Activated CD8-positive, alpha-beta T cell treated with anti-CD3 and anti-CD28 coated beads for 36 hours (primary cell): ENCODE measurements at regions of chrX and their contacts with region 1.

Region 1: GRCh38 chrX:79259073-79259689 is 108.0 kb downstream of the ITM2A start:
- DNase-seq: peak; percentile 70
- ATAC-seq: peak; percentile 81
- H3K4me3 Mint-ChIP-seq: peak overlapping the region; percentile 66
- H3K27ac Mint-ChIP-seq: peak overlapping the region; percentile 92
- H3K4me1 Mint-ChIP-seq: peaks cover 72% of the 10 kb centered on the region
- H3K27me3 Mint-ChIP-seq: no peaks in the 10 kb centered on the region
- CTCF ChIP-seq: no peak

Region 2: DNA sequence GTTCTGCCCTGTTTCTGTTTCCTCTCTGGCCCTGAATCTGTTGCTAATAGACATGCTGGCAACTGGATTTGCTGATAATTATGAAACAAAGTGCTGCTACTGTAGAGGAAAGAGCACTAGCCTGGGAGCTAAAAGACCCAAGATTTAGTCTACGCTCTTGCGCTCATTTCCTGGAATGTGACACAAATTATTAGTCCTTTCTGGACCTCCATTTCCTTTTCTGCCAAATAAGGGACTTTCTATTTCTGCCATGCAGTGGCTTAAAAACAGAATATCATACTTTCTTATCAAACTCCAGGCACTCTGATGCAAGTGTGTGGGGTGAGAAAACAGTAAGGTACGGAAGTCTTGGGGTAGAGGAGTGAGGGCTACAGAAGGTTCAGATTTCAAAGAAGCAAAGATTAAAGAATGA is 163.0 kb before region 1 on chrX:
- CTCF ChIA-PET with region 1: no interaction called
- POLR2A ChIA-PET with region 1: no interaction called
- intact Hi-C with region 1: loop called (anchors 5 kb)
- DNase-seq: no peak
- ATAC-seq: peak; percentile 53
- H3K4me3 Mint-ChIP-seq: peak overlapping the region; percentile 71
- H3K27ac Mint-ChIP-seq: peak overlapping the region; percentile 97
- H3K4me1 Mint-ChIP-seq: peaks cover 68% of the 10 kb centered on the region
- H3K27me3 Mint-ChIP-seq: no peaks in the 10 kb centered on the region
- CTCF ChIP-seq: no peak

Region 3: DNA sequence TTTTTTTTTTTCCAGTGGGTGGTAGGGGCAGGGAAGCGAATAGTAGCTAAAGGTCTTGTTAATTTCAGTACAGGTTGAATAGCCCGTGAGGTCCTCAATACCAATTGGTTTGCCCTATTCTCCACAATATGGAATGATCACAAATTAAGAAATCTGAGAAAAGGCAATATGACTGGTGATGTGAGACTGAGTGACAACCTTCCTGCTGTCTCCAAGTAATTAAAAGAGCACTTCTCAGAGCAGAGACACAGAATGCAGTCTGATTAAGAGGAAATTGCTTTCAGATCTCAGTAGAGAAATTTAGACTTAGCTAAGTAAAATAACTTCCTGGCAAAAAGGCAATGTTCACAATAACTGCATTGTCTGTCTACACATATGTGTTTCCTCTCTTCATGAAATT is 91.7 kb before region 1 on chrX:
- CTCF ChIA-PET with region 1: interaction called, 3 read pairs
- POLR2A ChIA-PET with region 1: interaction called, 4 read pairs
- intact Hi-C with region 1: loop called (anchors 5 kb)
- DNase-seq: no peak
- ATAC-seq: peak; percentile 35
- H3K4me3 Mint-ChIP-seq: peak overlapping the region; percentile 64
- H3K27ac Mint-ChIP-seq: peak overlapping the region; percentile 91
- H3K4me1 Mint-ChIP-seq: peaks cover 87% of the 10 kb centered on the region
- H3K27me3 Mint-ChIP-seq: no peaks in the 10 kb centered on the region
- CTCF ChIP-seq: no peak

Region 4: DNA sequence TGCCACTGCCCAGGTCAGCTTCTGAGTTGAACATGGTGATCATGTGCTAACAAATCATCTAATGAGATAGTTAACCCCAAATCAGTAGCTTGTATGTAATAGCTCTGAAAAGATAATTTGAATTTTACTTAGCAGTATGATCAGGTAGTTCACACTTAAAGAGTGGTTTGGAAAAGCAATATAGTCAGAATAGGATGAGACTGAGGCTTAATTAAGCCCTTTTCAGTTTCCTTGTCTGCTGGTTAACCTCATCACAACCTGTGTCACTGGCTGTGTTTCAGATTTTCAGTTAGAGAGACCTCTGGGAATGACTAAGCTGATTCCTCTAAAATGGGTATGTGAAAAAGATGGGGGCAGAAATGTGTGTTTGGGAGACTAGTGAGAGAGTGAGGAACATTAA is 76.6 kb before region 1 on chrX:
- CTCF ChIA-PET with region 1: interaction called, 3 read pairs
- POLR2A ChIA-PET with region 1: interaction called, 3 read pairs
- intact Hi-C with region 1: loop called (anchors 5 kb)
- DNase-seq: no peak
- ATAC-seq: peak; percentile 82
- H3K4me3 Mint-ChIP-seq: peak overlapping the region; percentile 47
- H3K27ac Mint-ChIP-seq: peak overlapping the region; percentile 94
- H3K4me1 Mint-ChIP-seq: peaks cover 61% of the 10 kb centered on the region
- H3K27me3 Mint-ChIP-seq: no peaks in the 10 kb centered on the region
- CTCF ChIP-seq: no peak